ENCODE measurements at regions of chr9 and their contacts with region 1.

Region 1: GRCh38 chr9:75200892-75201470 is 112.7 kb downstream of the OSTF1 start:
- DNase-seq: peak; percentile 23
- H3K4me3 ChIP-seq: no peak overlapping the region
- H3K27ac ChIP-seq: no peak overlapping the region
- H3K4me1 ChIP-seq: no peaks in the 10 kb centered on the region
- H3K27me3 ChIP-seq: no peaks in the 10 kb centered on the region
- CTCF ChIP-seq: peak; percentile 57

Region 2: GRCh38 chr9:75238311-75238978 is 37.5 kb after region 1 on chr9:
- intact Hi-C with region 1: loop called (anchors 2 kb)
- DNase-seq: peak; percentile 71
- H3K4me3 ChIP-seq: no peak overlapping the region
- H3K27ac ChIP-seq: no peak overlapping the region
- H3K4me1 ChIP-seq: no peaks in the 10 kb centered on the region
- H3K27me3 ChIP-seq: no peaks in the 10 kb centered on the region
- CTCF ChIP-seq: peak; percentile 66

Measured in colonic mucosa (tissue), 4 donors.